ENCODE measurements at regions of chr10 and their contacts with region 1.

Region 1: GRCh38 chr10:70135684-70136083 is 3.1 kb upstream of the AIFM2 start:
- DNase-seq: peak in 1 of 35 experiments; percentile 6
- ATAC-seq: no peak
- H3K4me3 ChIP-seq: no peak overlapping the region
- H3K4me3 Mint-ChIP-seq: no peak overlapping the region
- H3K27ac ChIP-seq: no peak overlapping the region
- H3K27ac Mint-ChIP-seq: no peak overlapping the region
- H3K4me1 ChIP-seq: peaks cover 0 to 23% of the 10 kb centered on the region in 2 experiments
- H3K4me1 Mint-ChIP-seq: peaks cover 26 to 36% (median 26%) of the 10 kb centered on the region in 3 donors
- H3K27me3 ChIP-seq: peaks cover 0 to 12% of the 10 kb centered on the region in 2 experiments
- H3K27me3 Mint-ChIP-seq: no peaks in the 10 kb centered on the region

Region 2: GRCh38 chr10:70115948-70116682 is 19.6 kb before region 1 on chr10:
- CTCF ChIA-PET with region 1: interaction called, 3 to 10 read pairs
- POLR2A ChIA-PET with region 1: no interaction called
- DNase-seq: peak in 28 of 35 experiments; percentile 14 to 74 (median 44)
- ATAC-seq: peak; percentile 64 to 86 (median 75)
- H3K4me3 ChIP-seq: no peak overlapping the region
- H3K4me3 Mint-ChIP-seq: no peak overlapping the region
- H3K27ac ChIP-seq: no peak overlapping the region
- H3K27ac Mint-ChIP-seq: no peak overlapping the region
- H3K4me1 ChIP-seq: peaks cover 0 to 10% of the 10 kb centered on the region in 2 experiments
- H3K4me1 Mint-ChIP-seq: peaks cover 6 to 8% (median 8%) of the 10 kb centered on the region in 3 donors
- H3K27me3 ChIP-seq: no peaks in the 10 kb centered on the region
- H3K27me3 Mint-ChIP-seq: no peaks in the 10 kb centered on the region

Measured in T-cell (primary cell).